ENCODE measurements at regions of chr1 and their contacts with region 1.

Region 1: GRCh38 chr1:39892601-39893595 is 8.8 kb downstream of the MYCL start:
- DNase-seq: no peak
- H3K4me3 Mint-ChIP-seq: no peak overlapping the region
- H3K27ac Mint-ChIP-seq: no peak overlapping the region
- H3K4me1 Mint-ChIP-seq: no peaks in the 10 kb centered on the region
- H3K27me3 Mint-ChIP-seq: peaks cover 56% of the 10 kb centered on the region

Region 2: GRCh38 chr1:39882152-39882551 is 10.7 kb before region 1 on chr1:
- CTCF ChIA-PET with region 1: interaction called, 10 read pairs
- POLR2A ChIA-PET with region 1: no interaction called
- DNase-seq: no peak
- H3K4me3 Mint-ChIP-seq: peak overlapping the region; percentile 92
- H3K27ac Mint-ChIP-seq: peak overlapping the region; percentile 86
- H3K4me1 Mint-ChIP-seq: peaks cover 30% of the 10 kb centered on the region
- H3K27me3 Mint-ChIP-seq: no peaks in the 10 kb centered on the region

Measured in activated CD4-positive, alpha-beta T cell treated with anti-CD3 and anti-CD28 coated beads, Interleukin-2, amount 10 ng/mL, durations not matched to agents 7 days and 5 days (primary cell).